Activated naive CD4-positive, alpha-beta T cell treated with anti-CD3 and anti-CD28 coated beads for 36 hours (primary cell): ENCODE measurements at regions of chr14 and their contacts with region 1.

Region 1: DNA sequence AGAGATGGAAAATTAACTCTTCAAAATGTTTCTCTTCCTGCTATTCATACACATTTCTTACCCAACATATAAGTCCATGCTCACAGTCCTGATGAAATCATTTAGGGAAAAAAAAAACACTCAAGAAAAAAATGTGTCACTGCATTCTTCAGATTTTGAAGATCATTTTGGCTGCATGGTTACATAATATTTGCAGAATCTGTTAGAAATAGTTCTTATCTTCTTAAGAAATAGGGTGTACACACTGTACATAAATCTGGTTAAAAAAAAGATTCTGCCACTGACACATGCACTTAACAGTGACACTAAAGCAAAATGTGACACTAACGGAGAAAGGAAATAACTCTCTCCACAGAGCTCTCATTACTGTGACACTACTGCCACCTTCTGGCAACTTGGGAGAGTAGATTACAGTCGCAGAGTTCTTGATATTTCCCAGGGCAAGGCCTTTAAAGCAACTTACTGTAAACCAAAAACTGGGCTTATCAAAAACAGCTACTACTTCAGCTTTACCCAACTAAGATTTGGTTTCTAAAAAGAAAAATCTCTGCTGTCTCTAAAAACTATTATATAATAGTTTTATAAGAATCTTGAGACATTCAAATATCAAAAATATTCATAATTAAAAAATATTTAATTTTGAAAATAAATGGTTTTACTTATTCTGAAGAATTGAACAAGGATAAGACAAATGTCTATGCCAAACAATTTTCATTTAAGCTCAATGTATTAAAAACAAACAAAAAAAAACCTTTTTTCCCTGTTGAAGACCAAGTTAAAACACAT is 65.0 kb downstream of the SETD3 start:
- DNase-seq: peak; percentile 80
- H3K4me3 Mint-ChIP-seq: no peak overlapping the region
- H3K27ac Mint-ChIP-seq: no peak overlapping the region
- H3K4me1 Mint-ChIP-seq: peaks cover 20% of the 10 kb centered on the region
- H3K27me3 Mint-ChIP-seq: no peaks in the 10 kb centered on the region

Region 2: DNA sequence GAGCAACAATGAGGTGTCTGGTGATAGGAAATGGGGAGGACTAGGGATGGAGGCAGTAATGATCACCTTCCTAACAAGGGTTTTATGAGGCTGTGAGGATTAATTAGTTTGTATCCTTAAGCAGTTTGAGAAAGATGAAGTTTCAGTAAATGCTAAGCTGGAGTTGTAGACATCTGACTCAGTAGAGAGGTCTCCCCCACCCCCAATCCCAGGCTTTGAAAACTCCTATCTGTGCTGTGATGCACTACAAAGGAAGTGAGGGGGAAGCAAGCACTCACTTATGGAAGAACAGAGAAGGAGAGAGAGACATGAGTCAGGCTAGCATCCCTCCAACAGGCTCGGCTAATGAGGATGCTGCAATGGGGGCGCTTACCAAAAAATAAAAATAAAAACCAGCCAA is 138.2 kb before region 1 on chr14:
- CTCF ChIA-PET with region 1: interaction called, 3 read pairs
- intact Hi-C with region 1: loop called (anchors 1 kb)
- DNase-seq: peak; percentile 37
- H3K4me3 Mint-ChIP-seq: no peak overlapping the region
- H3K27ac Mint-ChIP-seq: no peak overlapping the region
- H3K4me1 Mint-ChIP-seq: peaks cover 46% of the 10 kb centered on the region
- H3K27me3 Mint-ChIP-seq: no peaks in the 10 kb centered on the region

Region 3: DNA sequence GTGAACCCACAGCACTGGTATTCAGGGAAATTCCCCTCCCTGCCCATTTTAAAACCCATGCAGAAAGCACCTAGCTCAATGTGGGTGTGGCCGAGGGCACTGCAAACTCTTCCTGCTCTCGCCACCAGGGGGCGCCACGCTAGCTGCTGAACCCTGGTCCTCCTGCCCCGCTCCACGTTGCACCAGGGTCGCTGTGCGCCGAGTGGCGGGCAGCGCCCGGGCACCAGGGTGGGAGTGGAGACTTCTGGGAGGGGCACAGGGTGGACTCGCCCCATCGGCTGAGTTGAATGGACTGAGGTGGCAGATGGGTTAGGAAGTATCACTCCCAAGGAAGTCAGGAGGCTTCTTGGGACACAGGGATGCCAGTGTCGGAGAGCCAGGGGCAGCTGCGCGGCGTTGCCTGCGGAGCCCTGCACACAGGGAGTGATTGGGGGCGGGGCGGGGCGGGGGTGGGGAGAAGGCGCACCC is 95.5 kb before region 1 on chr14:
- CTCF ChIA-PET with region 1: interaction called, 13 read pairs
- intact Hi-C with region 1: loop called (anchors 1 kb)
- DNase-seq: peak; percentile 84
- H3K4me3 Mint-ChIP-seq: no peak overlapping the region
- H3K27ac Mint-ChIP-seq: no peak overlapping the region
- H3K4me1 Mint-ChIP-seq: no peaks in the 10 kb centered on the region
- H3K27me3 Mint-ChIP-seq: no peaks in the 10 kb centered on the region

Region 4: GRCh38 chr14:99393047-99393655 is 22.5 kb before region 1 on chr14:
- CTCF ChIA-PET with region 1: interaction called, 36 read pairs
- intact Hi-C with region 1: loop called (anchors 1 kb)
- DNase-seq: peak; percentile 37
- H3K4me3 Mint-ChIP-seq: no peak overlapping the region
- H3K27ac Mint-ChIP-seq: no peak overlapping the region
- H3K4me1 Mint-ChIP-seq: peaks cover 7% of the 10 kb centered on the region
- H3K27me3 Mint-ChIP-seq: no peaks in the 10 kb centered on the region